Activated B cell treated with CpG ODN at 0.5 μM for 24 hours (primary cell): ENCODE measurements at regions of chr2 and their contacts with region 1.

Region 1: GRCh38 chr2:60353406-60353800 is 200.1 kb downstream of the BCL11A start:
- DNase-seq: no peak
- ATAC-seq: peak; percentile 5
- H3K4me3 Mint-ChIP-seq: peak overlapping the region; percentile 52
- H3K27ac Mint-ChIP-seq: peak overlapping the region; percentile 97
- H3K4me1 Mint-ChIP-seq: peaks cover 100% of the 10 kb centered on the region
- H3K27me3 Mint-ChIP-seq: no peaks in the 10 kb centered on the region
- CTCF ChIP-seq: no peak

Region 2: DNA sequence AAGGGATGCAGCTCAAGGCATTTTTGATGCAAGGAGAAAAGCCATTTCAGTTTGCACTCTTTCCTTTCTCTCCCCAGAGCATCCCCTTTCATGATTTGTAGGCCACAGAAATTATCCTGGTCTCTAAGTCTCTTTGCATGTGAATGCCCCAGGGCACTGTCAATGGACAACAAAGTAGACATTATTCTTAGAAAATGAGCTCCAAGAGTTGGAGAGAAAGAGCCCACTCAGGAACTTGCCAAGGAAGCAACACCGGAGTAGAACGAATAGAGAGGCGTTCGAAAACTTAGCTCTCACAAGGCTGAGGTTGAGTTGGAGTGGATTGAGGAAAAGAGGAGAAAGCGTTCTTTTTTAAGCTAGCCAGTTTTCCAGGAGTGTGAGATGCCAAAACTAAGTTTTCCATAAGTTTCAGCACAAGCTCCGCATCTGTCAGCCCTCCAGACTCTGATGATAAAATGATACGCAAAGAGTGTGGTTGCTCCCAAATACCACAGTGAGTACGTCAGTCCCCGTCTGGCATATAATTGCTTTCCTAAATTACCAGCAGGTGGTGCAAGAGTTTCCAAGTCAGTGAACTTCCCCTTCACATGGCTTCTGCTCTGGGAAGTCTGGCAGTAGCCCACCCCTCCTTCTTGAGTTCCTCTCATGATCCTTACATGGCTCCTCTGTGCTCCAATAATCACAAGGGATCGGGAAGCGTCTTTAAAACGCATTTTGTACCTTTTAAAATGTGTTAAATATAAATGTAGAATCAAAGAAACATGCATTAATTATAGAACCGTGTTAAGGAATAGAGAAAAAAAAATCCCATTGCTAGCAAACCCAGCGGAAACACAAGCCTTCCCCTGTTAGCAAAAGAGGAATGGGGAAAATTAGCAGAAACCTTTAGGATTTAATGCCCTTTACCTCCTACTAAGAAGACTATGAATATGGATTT is 1051.7 kb before region 1 on chr2:
- CTCF ChIA-PET with region 1: no interaction called
- POLR2A ChIA-PET with region 1: no interaction called
- intact Hi-C with region 1: loop called (anchors 10 kb)
- DNase-seq: no peak
- ATAC-seq: peak; percentile 67
- H3K4me3 Mint-ChIP-seq: no peak overlapping the region
- H3K27ac Mint-ChIP-seq: no peak overlapping the region
- H3K4me1 Mint-ChIP-seq: no peaks in the 10 kb centered on the region
- H3K27me3 Mint-ChIP-seq: peaks cover 2% of the 10 kb centered on the region
- CTCF ChIP-seq: no peak

Region 3: DNA sequence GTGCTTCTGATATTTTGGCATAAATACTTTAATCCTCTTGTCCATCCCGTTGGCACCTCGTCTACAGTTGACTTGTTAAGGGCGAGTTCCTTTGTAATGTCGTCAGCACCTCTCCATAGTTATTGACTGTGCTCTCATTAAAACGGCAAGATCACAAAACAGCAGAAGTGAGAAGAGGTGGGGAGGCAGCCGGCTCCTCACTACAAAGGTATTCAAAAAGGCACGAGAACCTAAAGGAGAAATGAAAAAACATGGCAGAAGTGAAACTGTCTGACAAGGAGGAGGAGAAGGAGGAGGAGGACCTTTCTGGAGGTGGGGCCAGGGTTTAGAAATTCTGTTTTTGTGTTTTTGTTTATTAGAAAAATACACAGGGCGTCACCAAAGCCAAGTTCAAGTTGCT is 35.6 kb before region 1 on chr2:
- CTCF ChIA-PET with region 1: interaction called, 4 read pairs
- POLR2A ChIA-PET with region 1: interaction called, 11 read pairs
- intact Hi-C with region 1: loop called (anchors 1 kb)
- DNase-seq: no peak
- ATAC-seq: peak; percentile 85
- H3K4me3 Mint-ChIP-seq: peak overlapping the region; percentile 59
- H3K27ac Mint-ChIP-seq: peak overlapping the region; percentile 82
- H3K4me1 Mint-ChIP-seq: peaks cover 82% of the 10 kb centered on the region
- H3K27me3 Mint-ChIP-seq: no peaks in the 10 kb centered on the region
- CTCF ChIP-seq: no peak

Region 4: GRCh38 chr2:60371681-60372080 is 18.3 kb after region 1 on chr2:
- CTCF ChIA-PET with region 1: interaction called, 8 read pairs
- POLR2A ChIA-PET with region 1: interaction called, 75 read pairs
- intact Hi-C with region 1: loop called (anchors 1 kb)
- DNase-seq: no peak
- ATAC-seq: no peak
- H3K4me3 Mint-ChIP-seq: peak overlapping the region; percentile 46
- H3K27ac Mint-ChIP-seq: peak overlapping the region; percentile 95
- H3K4me1 Mint-ChIP-seq: peaks cover 84% of the 10 kb centered on the region
- H3K27me3 Mint-ChIP-seq: no peaks in the 10 kb centered on the region
- CTCF ChIP-seq: no peak

Region 5: GRCh38 chr2:60446413-60447267 is 93.2 kb after region 1 on chr2:
- CTCF ChIA-PET with region 1: interaction called, 5 read pairs
- POLR2A ChIA-PET with region 1: interaction called, 104 read pairs
- intact Hi-C with region 1: no loop called
- DNase-seq: no peak
- ATAC-seq: peak; percentile 78
- H3K4me3 Mint-ChIP-seq: peak overlapping the region; percentile 78
- H3K27ac Mint-ChIP-seq: peak overlapping the region; percentile 98
- H3K4me1 Mint-ChIP-seq: peaks cover 90% of the 10 kb centered on the region
- H3K27me3 Mint-ChIP-seq: no peaks in the 10 kb centered on the region
- CTCF ChIP-seq: no peak

Region 6: GRCh38 chr2:60515721-60516226 is 162.4 kb after region 1 on chr2:
- CTCF ChIA-PET with region 1: interaction called, 3 read pairs
- POLR2A ChIA-PET with region 1: interaction called, 14 read pairs
- intact Hi-C with region 1: no loop called
- DNase-seq: peak; percentile 57
- ATAC-seq: peak; percentile 76
- H3K4me3 Mint-ChIP-seq: peak overlapping the region; percentile 68
- H3K27ac Mint-ChIP-seq: peak overlapping the region; percentile 91
- H3K4me1 Mint-ChIP-seq: peaks cover 97% of the 10 kb centered on the region
- H3K27me3 Mint-ChIP-seq: no peaks in the 10 kb centered on the region
- CTCF ChIP-seq: no peak